Activated CD4-positive, alpha-beta memory T cell treated with anti-CD3 and anti-CD28 coated beads, Interleukin-2, amount 10 ng/mL, durations not matched to agents 7 days and 5 days (primary cell): ENCODE measurements at regions of chr19 and their contacts with region 1.

Region 1: GRCh38 chr19:506404-507285 is 652 bp upstream of the TPGS1 start:
- DNase-seq: peak; percentile 94
- H3K4me3 Mint-ChIP-seq: peak overlapping the region; percentile 81
- H3K27ac Mint-ChIP-seq: peak overlapping the region; percentile 98
- H3K4me1 Mint-ChIP-seq: peaks cover 52% of the 10 kb centered on the region
- H3K27me3 Mint-ChIP-seq: no peaks in the 10 kb centered on the region

Region 2: DNA sequence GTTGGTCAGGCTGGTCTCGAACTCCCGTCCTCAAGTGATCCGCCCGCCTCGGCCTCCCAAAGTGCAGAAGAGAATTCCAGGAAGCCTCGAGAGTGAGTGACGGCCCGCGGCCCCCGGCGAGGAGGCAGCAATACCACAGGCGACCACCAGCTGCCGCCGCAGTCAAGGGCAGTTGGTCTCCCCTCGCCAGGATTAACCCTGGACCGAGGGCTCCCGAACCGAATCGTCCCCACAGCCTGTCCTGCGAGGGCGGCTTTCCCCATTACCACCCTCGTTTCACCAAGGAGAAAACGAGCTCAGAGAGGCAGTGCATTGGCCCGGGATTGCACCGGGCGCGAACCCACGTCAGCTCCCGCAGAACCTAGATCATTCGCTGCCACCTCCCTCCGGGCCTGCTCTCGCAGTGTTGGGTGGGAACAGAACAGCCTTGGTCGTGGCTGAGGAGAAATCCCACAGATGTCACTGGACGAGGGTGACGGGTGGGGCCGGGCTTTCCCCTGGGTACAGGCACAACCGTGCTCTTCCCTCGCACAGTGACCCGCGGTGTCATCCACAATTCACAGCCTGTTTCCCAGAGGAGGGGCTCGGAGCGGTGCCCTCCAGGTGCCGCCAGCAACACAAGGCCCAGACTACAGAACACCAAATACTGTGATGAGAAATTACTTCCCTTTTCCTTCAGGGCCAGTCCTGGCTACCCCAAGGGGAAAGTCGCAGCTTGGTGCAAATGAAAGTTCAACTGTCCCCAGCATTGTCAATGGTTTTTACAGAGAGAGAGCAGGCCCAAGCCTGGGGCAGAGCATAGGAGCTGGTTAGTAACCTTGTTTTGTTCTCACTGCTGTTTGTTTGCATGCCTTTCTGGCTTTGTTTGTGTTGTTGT is 122.5 kb before region 1 on chr19:
- CTCF ChIA-PET with region 1: interaction called, 12 read pairs
- POLR2A ChIA-PET with region 1: interaction called, 4 read pairs
- DNase-seq: no peak
- H3K4me3 Mint-ChIP-seq: no peak overlapping the region
- H3K27ac Mint-ChIP-seq: no peak overlapping the region
- H3K4me1 Mint-ChIP-seq: peaks cover 24% of the 10 kb centered on the region
- H3K27me3 Mint-ChIP-seq: peaks cover 47% of the 10 kb centered on the region

Region 3: DNA sequence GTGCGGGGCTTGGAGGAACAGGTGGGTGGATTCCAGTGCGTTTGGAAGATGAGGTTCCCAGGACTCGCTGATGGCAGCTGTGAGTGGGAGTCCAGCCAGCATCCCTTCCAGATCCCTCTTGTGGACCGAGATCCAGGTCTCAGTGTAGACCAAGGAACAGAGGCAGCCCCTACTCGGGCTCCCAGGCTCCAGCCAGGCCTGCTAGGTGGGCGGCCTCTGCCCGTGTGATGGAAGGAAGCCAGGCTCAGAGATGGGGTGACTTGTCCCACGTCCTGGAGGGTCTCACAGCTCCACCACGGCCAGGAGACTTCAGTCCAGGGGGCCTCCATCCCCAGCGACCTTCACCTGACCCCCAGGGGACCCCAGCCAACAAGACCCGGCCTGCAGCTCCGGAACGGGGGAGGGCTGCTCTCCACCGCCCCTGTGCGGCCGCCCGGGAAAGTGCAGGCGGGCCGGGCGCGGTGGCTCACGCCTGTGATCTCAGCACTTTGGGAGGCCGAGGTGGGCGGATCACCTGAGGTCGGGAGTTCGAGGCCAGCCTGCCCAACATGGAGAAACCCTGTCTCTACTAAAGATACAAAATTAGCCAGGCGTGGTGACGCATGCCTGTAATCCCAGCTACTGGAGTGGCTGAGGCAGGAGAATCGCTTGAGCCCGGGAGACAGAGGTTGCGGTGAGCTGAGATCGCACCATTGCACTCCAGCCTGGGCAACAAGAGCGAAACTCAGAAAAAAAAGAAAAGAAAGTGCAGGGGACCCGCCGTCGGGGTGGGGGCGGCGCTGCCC is 11.1 kb before region 1 on chr19:
- CTCF ChIA-PET with region 1: interaction called, 14 read pairs
- POLR2A ChIA-PET with region 1: interaction called, 25 read pairs
- DNase-seq: peak; percentile 67
- H3K4me3 Mint-ChIP-seq: no peak overlapping the region
- H3K27ac Mint-ChIP-seq: no peak overlapping the region
- H3K4me1 Mint-ChIP-seq: peaks cover 5% of the 10 kb centered on the region
- H3K27me3 Mint-ChIP-seq: peaks cover 17% of the 10 kb centered on the region

Region 4: DNA sequence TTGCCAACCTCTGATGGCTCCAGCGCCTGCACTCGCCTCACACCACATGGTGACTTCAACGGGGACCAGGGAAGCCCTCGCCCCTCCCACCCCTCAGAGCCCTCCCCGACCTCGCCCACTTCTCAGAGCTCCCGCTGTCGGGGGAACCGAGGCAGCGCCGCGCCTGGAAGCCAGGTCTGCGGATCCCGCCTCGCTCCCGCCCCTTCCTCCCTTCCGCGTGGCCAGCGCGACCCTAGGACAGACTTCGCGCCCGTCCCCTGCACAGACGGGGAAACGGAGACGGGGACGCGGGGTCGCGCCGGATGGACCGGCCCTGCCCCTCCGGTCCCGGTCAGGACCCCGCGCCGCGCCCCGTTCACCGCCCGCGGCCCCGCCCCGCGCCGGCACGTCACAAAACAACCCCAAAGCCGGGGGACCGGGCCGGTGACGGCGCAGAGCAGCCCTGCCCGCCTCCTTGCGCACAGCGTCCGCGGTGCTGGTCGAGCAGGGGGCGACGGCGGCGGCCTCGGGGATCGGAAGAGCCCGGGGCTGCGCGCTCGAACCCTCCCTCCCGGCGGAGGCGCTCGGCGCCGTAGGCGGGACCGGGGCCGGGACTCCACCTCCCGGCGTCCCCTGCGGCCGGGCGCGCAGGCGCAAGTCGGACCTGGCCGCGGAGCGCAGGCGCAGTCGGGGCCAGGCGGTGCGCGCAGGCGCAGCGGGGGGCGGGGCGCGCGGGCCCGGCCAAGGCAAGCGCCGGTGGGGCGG is 24.5 kb after region 1 on chr19:
- CTCF ChIA-PET with region 1: interaction called, 59 read pairs
- POLR2A ChIA-PET with region 1: interaction called, 46 read pairs
- DNase-seq: peak; percentile 92
- H3K4me3 Mint-ChIP-seq: peak overlapping the region; percentile 78
- H3K27ac Mint-ChIP-seq: peak overlapping the region; percentile 72
- H3K4me1 Mint-ChIP-seq: peaks cover 21% of the 10 kb centered on the region
- H3K27me3 Mint-ChIP-seq: peaks cover 2% of the 10 kb centered on the region

Region 5: DNA sequence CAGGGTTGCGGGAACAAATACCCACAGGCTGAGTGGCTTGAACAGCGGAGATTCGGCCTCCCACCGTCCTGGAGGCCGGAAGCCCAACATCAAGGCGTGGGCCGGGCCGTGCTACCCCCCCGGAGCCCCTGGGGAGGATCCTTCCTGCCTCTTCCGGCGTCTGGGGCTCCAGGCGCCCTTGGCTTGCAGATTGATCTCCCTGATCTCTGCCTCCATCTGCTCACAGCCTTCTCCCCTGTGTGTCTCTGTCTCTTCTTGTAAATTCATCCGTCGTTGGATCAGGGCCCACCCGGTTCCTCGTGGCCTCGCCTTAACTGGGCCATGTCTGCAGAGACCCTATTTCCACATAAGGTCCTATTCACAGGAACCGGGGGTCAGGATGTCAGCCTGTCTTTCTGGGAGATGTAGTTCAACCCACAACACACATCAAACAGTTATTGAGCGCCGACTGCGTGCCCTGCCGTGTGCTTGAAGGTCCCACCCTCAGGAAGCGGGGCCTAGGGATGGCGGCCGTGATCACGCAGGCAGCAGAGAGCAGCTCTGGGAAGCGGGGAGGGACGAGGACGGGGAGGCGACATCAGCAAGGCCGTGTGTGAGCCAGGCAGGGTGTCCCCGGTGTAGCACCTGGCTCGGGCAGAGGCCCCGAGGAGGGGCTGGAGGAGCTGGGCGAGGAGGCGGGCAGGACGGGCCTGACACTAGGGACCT is 104.3 kb after region 1 on chr19:
- CTCF ChIA-PET with region 1: interaction called, 3 read pairs
- POLR2A ChIA-PET with region 1: interaction called, 10 read pairs
- DNase-seq: peak; percentile 75
- H3K4me3 Mint-ChIP-seq: peak overlapping the region; percentile 91
- H3K27ac Mint-ChIP-seq: peak overlapping the region; percentile 99
- H3K4me1 Mint-ChIP-seq: peaks cover 29% of the 10 kb centered on the region
- H3K27me3 Mint-ChIP-seq: no peaks in the 10 kb centered on the region

Region 6: GRCh38 chr19:703651-704446 is 197.2 kb after region 1 on chr19:
- CTCF ChIA-PET with region 1: no interaction called
- POLR2A ChIA-PET with region 1: no interaction called
- DNase-seq: peak; percentile 72
- H3K4me3 Mint-ChIP-seq: no peak overlapping the region
- H3K27ac Mint-ChIP-seq: no peak overlapping the region
- H3K4me1 Mint-ChIP-seq: peaks cover 16% of the 10 kb centered on the region
- H3K27me3 Mint-ChIP-seq: peaks cover 18% of the 10 kb centered on the region